Adrenal gland (tissue), 19 donors: ENCODE measurements at regions of chr3 and their contacts with region 1.

Region 1: GRCh38 chr3:132343018-132343612 is 25.9 kb downstream of the ACP3 start:
- DNase-seq: peak; percentile 25 to 71 (median 47)
- H3K4me3 ChIP-seq: peak overlapping the region in 2 of 4 donors; percentile 9 to 38
- H3K27ac ChIP-seq: no peak overlapping the region
- H3K4me1 ChIP-seq: peaks cover 0 to 4% of the 10 kb centered on the region in 2 donors
- H3K27me3 ChIP-seq: no peaks in the 10 kb centered on the region
- CTCF ChIP-seq: peak; percentile 85 to 98 (median 92)
- POLR2A ChIP-seq: no peak

Region 2: DNA sequence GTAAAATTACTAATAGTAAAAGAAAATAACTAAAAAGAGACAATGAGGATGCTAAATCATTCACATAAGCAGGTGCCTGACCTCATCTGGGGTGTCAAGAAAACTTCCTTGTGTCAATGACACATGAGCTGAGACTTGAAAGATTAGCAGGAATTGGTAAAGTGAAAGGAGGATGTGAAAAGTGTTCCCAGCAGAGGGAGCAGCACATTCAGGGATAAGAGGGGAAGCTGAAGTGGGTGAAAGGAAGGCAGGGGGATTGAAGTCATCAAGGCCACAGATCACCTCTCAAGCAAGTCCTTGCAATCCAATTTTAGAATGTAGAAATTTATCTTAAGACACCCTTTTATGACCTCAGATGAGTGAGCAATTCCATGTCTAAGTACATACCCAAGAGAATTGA is 86.1 kb before region 1 on chr3:
- intact Hi-C with region 1: loop called (anchors 5 kb)
- DNase-seq: peak; percentile 14 to 52 (median 31)
- H3K4me3 ChIP-seq: no peak overlapping the region
- H3K27ac ChIP-seq: no peak overlapping the region
- H3K4me1 ChIP-seq: no peaks in the 10 kb centered on the region
- H3K27me3 ChIP-seq: no peaks in the 10 kb centered on the region
- CTCF ChIP-seq: peak; percentile 31 to 68 (median 58)
- POLR2A ChIP-seq: no peak

Region 3: GRCh38 chr3:132268956-132269355 is 74.2 kb before region 1 on chr3:
- intact Hi-C with region 1: loop called in 1 of 2 experiments (anchors 5 kb)
- DNase-seq: peak in 4 of 7 donors; percentile 27 to 57 (median 40)
- H3K4me3 ChIP-seq: no peak overlapping the region
- H3K27ac ChIP-seq: no peak overlapping the region
- H3K4me1 ChIP-seq: no peaks in the 10 kb centered on the region
- H3K27me3 ChIP-seq: no peaks in the 10 kb centered on the region
- CTCF ChIP-seq: peak in 5 of 6 experiments; percentile 29 to 40 (median 30)
- POLR2A ChIP-seq: no peak

Region 4: GRCh38 chr3:132432639-132433038 is 89.5 kb after region 1 on chr3:
- intact Hi-C with region 1: no loop called
- DNase-seq: peak in 1 of 7 donors; percentile 11
- H3K4me3 ChIP-seq: no peak overlapping the region
- H3K27ac ChIP-seq: no peak overlapping the region
- H3K4me1 ChIP-seq: peaks cover 12 to 27% of the 10 kb centered on the region in 2 donors
- H3K27me3 ChIP-seq: no peaks in the 10 kb centered on the region
- CTCF ChIP-seq: no peak
- POLR2A ChIP-seq: no peak

Region 5: DNA sequence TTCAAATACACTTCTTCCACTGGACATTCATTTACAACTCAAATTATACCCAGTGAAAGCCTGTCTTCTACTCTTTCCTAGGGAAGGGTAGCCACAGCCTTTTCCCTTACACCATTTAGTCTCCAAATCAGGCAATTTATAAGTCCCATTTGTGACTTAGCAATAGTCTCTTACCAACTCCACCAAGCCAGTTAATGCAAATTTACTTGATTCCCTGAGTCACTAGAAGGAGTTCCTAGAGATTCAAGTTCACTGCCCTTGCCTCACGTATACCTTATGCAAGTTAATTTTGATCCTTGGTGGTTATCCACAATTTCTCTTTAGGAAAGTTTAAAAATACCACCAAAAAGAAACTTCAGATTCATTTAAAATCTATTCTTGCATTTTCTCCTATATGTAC is 395.2 kb after region 1 on chr3:
- intact Hi-C with region 1: no loop called
- DNase-seq: no peak
- H3K4me3 ChIP-seq: no peak overlapping the region
- H3K27ac ChIP-seq: no peak overlapping the region
- H3K4me1 ChIP-seq: no peaks in the 10 kb centered on the region
- H3K27me3 ChIP-seq: no peaks in the 10 kb centered on the region
- CTCF ChIP-seq: no peak
- POLR2A ChIP-seq: no peak